Heart left ventricle (tissue), 16 donors: ENCODE measurements at regions of chr1 and their contacts with region 1.

Region 1: GRCh38 chr1:33466159-33466558 is 6.3 kb upstream of the ZSCAN20 start:
- DNase-seq: peak in 4 of 5 donors; percentile 56 to 72 (median 65)
- ATAC-seq: peak in 2 of 4 donors; percentile 25 to 29
- H3K4me3 ChIP-seq: no peak overlapping the region
- H3K27ac ChIP-seq: peak overlapping the region in 2 of 12 donors; percentile 7 to 12
- H3K4me1 ChIP-seq: peaks cover 0 to 48% (median 26%) of the 10 kb centered on the region in 12 donors
- H3K27me3 ChIP-seq: no peaks in the 10 kb centered on the region
- CTCF ChIP-seq: no peak
- POLR2A ChIP-seq: no peak

Region 2: DNA sequence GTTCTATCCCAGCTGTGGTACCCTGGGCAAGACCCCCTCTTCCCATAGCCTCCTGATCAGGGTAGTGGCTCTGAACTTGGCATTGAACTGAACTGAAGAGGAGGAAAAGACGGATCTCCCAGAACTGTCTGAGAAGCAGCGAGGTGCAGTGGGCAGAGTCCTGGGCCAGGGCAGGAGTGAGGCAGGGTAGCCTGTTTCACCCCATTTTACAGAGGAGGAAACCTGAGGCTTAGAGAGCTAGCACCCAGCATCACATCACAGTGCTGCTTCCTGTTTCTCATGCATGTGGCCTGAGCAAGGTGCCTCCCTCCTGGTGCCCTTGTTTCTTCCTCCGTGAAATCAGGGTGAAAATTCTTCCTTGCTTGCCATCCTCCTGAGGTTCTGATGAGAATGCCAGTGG is 192.8 kb before region 1 on chr1:
- intact Hi-C with region 1: no loop called
- DNase-seq: no peak
- ATAC-seq: no peak
- H3K4me3 ChIP-seq: no peak overlapping the region
- H3K27ac ChIP-seq: peak overlapping the region in 1 of 12 donors; percentile 46
- H3K4me1 ChIP-seq: peaks cover 0 to 54% (median 33%) of the 10 kb centered on the region in 12 donors
- H3K27me3 ChIP-seq: no peaks in the 10 kb centered on the region
- CTCF ChIP-seq: no peak
- POLR2A ChIP-seq: no peak

Region 3: GRCh38 chr1:33300673-33301072 is 165.5 kb before region 1 on chr1:
- intact Hi-C with region 1: loop called (anchors 1 to 5 kb)
- DNase-seq: peak in 2 of 5 donors; percentile 58 to 67
- ATAC-seq: peak in 2 of 4 donors; percentile 35 to 52
- H3K4me3 ChIP-seq: no peak overlapping the region
- H3K27ac ChIP-seq: peak overlapping the region in 3 of 12 donors; percentile 7 to 56 (median 45)
- H3K4me1 ChIP-seq: peaks cover 0 to 27% (median 12%) of the 10 kb centered on the region in 12 donors
- H3K27me3 ChIP-seq: no peaks in the 10 kb centered on the region
- CTCF ChIP-seq: no peak
- POLR2A ChIP-seq: no peak